ENCODE measurements at regions of chr5 and their contacts with region 1.

Region 1: DNA sequence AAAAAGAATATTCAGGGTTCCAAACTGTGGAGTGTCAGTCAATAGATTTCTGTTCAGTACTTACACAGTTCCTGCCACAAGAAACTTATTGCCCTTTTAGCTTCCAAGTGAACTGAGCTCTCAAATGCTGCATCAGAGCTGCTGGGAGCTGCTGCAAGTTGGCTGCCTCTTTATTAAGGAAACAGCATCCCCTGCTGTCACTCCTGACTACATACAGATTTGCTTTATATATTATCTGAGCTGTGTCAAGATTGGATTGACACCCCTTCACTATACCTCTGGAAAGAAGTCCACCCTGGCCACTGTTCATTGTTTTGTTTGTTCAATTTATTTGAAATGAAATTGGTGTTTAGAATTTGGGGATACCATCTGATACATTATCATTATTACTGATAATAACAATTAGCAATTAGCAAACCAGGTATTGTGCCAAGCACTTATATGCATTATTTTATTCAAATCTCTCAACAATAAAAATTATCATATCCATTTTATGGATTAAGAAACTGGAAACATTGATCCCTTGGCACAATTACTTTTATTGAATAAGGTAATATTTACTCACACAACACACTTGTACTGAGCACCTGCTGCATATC is 16.4 kb upstream of the C5orf58 start:
- DNase-seq: no peak
- CTCF ChIP-seq: peak; percentile 52

Region 2: GRCh38 chr5:170080217-170080616 is 136.1 kb before region 1 on chr5:
- CTCF ChIA-PET with region 1: no interaction called
- POLR2A ChIA-PET with region 1: no interaction called
- DNase-seq: no peak
- CTCF ChIP-seq: no peak

Region 3: GRCh38 chr5:170100066-170100943 is 116.1 kb before region 1 on chr5:
- CTCF ChIA-PET with region 1: interaction called, 14 read pairs
- POLR2A ChIA-PET with region 1: no interaction called
- DNase-seq: peak; percentile 64
- CTCF ChIP-seq: peak; percentile 60

Region 4: DNA sequence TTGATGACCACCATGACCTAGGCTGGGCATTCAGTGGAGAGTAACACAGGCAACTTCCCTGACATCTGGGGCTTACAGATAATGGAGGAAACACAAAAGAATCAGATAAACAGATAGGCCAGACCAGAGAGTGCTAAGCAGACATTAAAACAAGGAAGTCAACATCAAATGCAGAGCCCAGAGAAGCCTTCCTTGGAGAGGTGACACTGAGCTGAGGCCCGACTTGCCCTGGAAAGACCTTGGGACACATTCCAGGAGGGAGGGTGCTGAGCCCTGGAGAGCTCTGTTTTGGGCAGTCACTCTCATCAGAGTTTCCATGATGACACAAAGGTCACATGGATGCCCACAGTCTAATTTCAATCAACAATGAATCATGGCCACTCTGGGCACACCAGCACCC is 15.5 kb before region 1 on chr5:
- CTCF ChIA-PET with region 1: interaction called, 11 read pairs
- POLR2A ChIA-PET with region 1: no interaction called
- DNase-seq: no peak
- CTCF ChIP-seq: no peak

Region 5: DNA sequence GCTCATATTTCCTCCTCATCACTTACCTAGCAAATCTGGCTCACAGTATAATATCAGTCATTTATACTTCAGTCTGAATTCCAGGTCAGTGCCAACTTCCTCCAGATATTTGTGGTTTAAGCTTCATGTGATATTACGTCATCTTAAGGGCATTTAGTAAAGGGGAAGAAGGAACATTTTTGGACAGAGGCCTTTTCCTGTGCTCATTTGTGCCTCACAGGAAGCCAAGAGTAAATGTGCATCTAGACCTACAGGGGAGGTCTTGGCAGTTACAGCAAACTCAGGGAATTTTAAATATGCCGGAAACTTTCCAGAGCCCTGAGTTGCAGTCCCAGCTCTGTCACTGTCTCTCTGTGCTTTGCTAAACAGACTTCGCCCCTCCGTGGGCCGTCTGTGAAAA is 275.1 kb after region 1 on chr5:
- CTCF ChIA-PET with region 1: no interaction called
- POLR2A ChIA-PET with region 1: no interaction called
- DNase-seq: no peak
- CTCF ChIP-seq: no peak